Heart left ventricle (tissue), 16 donors: ENCODE measurements at regions of chrX and their contacts with region 1.

Region 1: GRCh38 chrX:13646154-13646549 is 6.8 kb upstream of the TCEANC start:
- DNase-seq: peak; percentile 43 to 69 (median 64)
- ATAC-seq: peak in 3 of 4 donors; percentile 68 to 81 (median 78)
- H3K4me3 ChIP-seq: no peak overlapping the region
- H3K27ac ChIP-seq: no peak overlapping the region
- H3K4me1 ChIP-seq: peaks cover 0 to 10% (median 0%) of the 10 kb centered on the region in 12 donors
- H3K27me3 ChIP-seq: peaks cover 0 to 32% (median 0%) of the 10 kb centered on the region in 9 donors
- CTCF ChIP-seq: peak; percentile 30 to 74 (median 62)
- POLR2A ChIP-seq: no peak

Region 2: DNA sequence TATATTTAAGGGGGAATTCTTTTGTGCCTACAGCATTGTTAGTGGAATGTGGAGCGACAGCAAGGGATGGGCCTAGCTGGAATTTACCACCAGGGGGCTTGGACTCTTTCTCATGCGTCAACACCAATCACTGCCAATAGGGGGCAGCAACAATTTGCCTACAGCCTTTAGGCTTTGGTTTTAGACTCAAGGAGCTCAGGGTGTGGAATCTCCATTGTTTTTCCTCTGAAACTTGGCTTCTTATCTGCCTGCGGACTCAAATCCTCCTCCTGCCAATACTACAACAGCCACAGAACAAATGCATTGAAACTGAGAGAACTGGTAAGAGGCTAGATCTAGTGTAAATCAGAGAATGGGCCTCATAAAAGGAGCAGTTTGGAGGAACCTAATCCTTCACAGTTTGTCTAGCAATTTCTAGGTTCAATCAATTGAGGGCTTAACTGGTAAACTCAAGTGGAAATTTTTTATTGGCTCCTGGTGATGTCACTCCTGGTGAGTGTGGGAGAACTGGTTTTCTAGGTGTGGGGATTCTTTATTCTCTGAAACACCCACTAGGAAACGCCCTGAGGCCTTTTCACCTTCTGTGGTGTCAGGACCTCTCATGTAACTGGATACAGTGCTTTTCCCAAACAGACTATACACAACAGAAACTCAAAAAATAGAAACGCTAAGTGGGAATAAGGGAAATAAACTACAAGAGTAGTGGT is 699.2 kb before region 1 on chrX:
- intact Hi-C with region 1: loop called in 3 of 10 experiments (anchors 5 to 10 kb)
- DNase-seq: peak in 4 of 5 donors; percentile 59 to 62 (median 60)
- ATAC-seq: peak in 3 of 4 donors; percentile 75 to 79 (median 78)
- H3K4me3 ChIP-seq: no peak overlapping the region
- H3K27ac ChIP-seq: peak overlapping the region in 8 of 12 donors; percentile 32 to 77 (median 64)
- H3K4me1 ChIP-seq: peaks cover 0 to 55% (median 14%) of the 10 kb centered on the region in 12 donors
- H3K27me3 ChIP-seq: peaks cover 0 to 9% (median 0%) of the 10 kb centered on the region in 9 donors
- CTCF ChIP-seq: peak; percentile 73 to 97 (median 83)
- POLR2A ChIP-seq: no peak

Region 3: GRCh38 chrX:12955882-12956703 is 690.1 kb before region 1 on chrX:
- intact Hi-C with region 1: loop called in 1 of 10 experiments (anchors 5 kb)
- DNase-seq: peak in 4 of 5 donors; percentile 43 to 76 (median 62)
- ATAC-seq: peak; percentile 67 to 91 (median 86)
- H3K4me3 ChIP-seq: peak overlapping the region in 3 of 12 donors; percentile 4 to 45 (median 30)
- H3K27ac ChIP-seq: peak overlapping the region; percentile 46 to 92 (median 75)
- H3K4me1 ChIP-seq: peaks cover 0 to 59% (median 8%) of the 10 kb centered on the region in 12 donors
- H3K27me3 ChIP-seq: peaks cover 0 to 5% (median 0%) of the 10 kb centered on the region in 9 donors
- CTCF ChIP-seq: no peak
- POLR2A ChIP-seq: no peak

Region 4: GRCh38 chrX:13418126-13419097 is 227.7 kb before region 1 on chrX:
- intact Hi-C with region 1: no loop called
- DNase-seq: no peak
- ATAC-seq: no peak
- H3K4me3 ChIP-seq: no peak overlapping the region
- H3K27ac ChIP-seq: no peak overlapping the region
- H3K4me1 ChIP-seq: no peaks in the 10 kb centered on the region
- H3K27me3 ChIP-seq: peaks cover 0 to 11% (median 0%) of the 10 kb centered on the region in 9 donors
- CTCF ChIP-seq: no peak
- POLR2A ChIP-seq: no peak

Region 5: GRCh38 chrX:13506574-13506973 is 139.6 kb before region 1 on chrX:
- intact Hi-C with region 1: loop called (anchors 1 to 5 kb)
- DNase-seq: peak in 4 of 5 donors; percentile 13 to 61 (median 28)
- ATAC-seq: no peak
- H3K4me3 ChIP-seq: no peak overlapping the region
- H3K27ac ChIP-seq: no peak overlapping the region
- H3K4me1 ChIP-seq: no peaks in the 10 kb centered on the region
- H3K27me3 ChIP-seq: peaks cover 0 to 34% (median 0%) of the 10 kb centered on the region in 9 donors
- CTCF ChIP-seq: peak; percentile 63 to 83 (median 74)
- POLR2A ChIP-seq: no peak

Region 6: GRCh38 chrX:14133912-14134311 is 487.8 kb after region 1 on chrX:
- intact Hi-C with region 1: no loop called
- DNase-seq: no peak
- ATAC-seq: no peak
- H3K4me3 ChIP-seq: no peak overlapping the region
- H3K27ac ChIP-seq: no peak overlapping the region
- H3K4me1 ChIP-seq: no peaks in the 10 kb centered on the region
- H3K27me3 ChIP-seq: peaks cover 0 to 19% (median 0%) of the 10 kb centered on the region in 9 donors
- CTCF ChIP-seq: no peak
- POLR2A ChIP-seq: no peak